Heart left ventricle (tissue), 16 donors: ENCODE measurements at regions of chr17 and their contacts with region 1.

Region 1: DNA sequence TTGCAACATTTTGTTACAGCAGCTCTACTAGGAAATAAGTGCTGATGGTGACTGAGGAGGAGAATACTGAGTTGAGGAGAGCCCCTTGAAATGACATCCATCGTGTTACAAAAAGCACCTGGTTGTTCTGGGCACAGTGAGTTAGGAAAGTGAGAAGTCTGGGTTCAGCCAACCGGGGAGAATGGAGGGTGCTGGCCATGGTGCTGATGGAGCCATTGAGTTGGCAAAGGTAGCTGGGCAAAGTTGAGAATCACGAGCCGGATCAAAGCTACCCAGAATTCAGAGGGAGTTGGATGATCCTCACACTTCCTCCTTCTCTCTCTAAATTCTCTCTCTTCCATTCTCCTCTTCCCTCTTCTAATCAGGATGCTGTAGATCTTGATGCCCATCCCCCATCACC is 35.0 kb upstream of the ASIC2 start:
- DNase-seq: no peak
- ATAC-seq: no peak
- H3K4me3 ChIP-seq: no peak overlapping the region
- H3K27ac ChIP-seq: no peak overlapping the region
- H3K4me1 ChIP-seq: no peaks in the 10 kb centered on the region
- H3K27me3 ChIP-seq: peaks cover 0 to 17% (median 0%) of the 10 kb centered on the region in 9 donors
- CTCF ChIP-seq: no peak
- POLR2A ChIP-seq: no peak

Region 2: GRCh38 chr17:33106525-33107165 is 221.5 kb before region 1 on chr17:
- intact Hi-C with region 1: loop called in 1 of 10 experiments (anchors 10 kb)
- DNase-seq: no peak
- ATAC-seq: no peak
- H3K4me3 ChIP-seq: no peak overlapping the region
- H3K27ac ChIP-seq: no peak overlapping the region
- H3K4me1 ChIP-seq: no peaks in the 10 kb centered on the region
- H3K27me3 ChIP-seq: peaks cover 0 to 23% (median 0%) of the 10 kb centered on the region in 9 donors
- CTCF ChIP-seq: no peak
- POLR2A ChIP-seq: no peak